Activated CD8-positive, alpha-beta memory T cell treated with anti-CD3 and anti-CD28 coated beads, Interleukin-2, amount 10 ng/mL, durations not matched to agents 7 days and 5 days (primary cell): ENCODE measurements at regions of chr6 and their contacts with region 1.

Region 1: GRCh38 chr6:168880271-168880670 is 373.4 kb downstream of the THBS2 start:
- DNase-seq: no peak
- ATAC-seq: no peak
- H3K4me3 Mint-ChIP-seq: no peak overlapping the region
- H3K27ac Mint-ChIP-seq: no peak overlapping the region
- H3K4me1 Mint-ChIP-seq: peaks cover 8% of the 10 kb centered on the region
- H3K27me3 Mint-ChIP-seq: no peaks in the 10 kb centered on the region

Region 2: GRCh38 chr6:168370310-168370991 is 509.8 kb before region 1 on chr6:
- CTCF ChIA-PET with region 1: interaction called, 11 read pairs
- DNase-seq: peak; percentile 54
- ATAC-seq: peak; percentile 73
- H3K4me3 Mint-ChIP-seq: no peak overlapping the region
- H3K27ac Mint-ChIP-seq: no peak overlapping the region
- H3K4me1 Mint-ChIP-seq: peaks cover 5% of the 10 kb centered on the region
- H3K27me3 Mint-ChIP-seq: peaks cover 8% of the 10 kb centered on the region

Region 3: GRCh38 chr6:168623736-168624135 is 256.5 kb before region 1 on chr6:
- CTCF ChIA-PET with region 1: no interaction called
- DNase-seq: no peak
- ATAC-seq: no peak
- H3K4me3 Mint-ChIP-seq: no peak overlapping the region
- H3K27ac Mint-ChIP-seq: no peak overlapping the region
- H3K4me1 Mint-ChIP-seq: peaks cover 11% of the 10 kb centered on the region
- H3K27me3 Mint-ChIP-seq: no peaks in the 10 kb centered on the region

Region 4: DNA sequence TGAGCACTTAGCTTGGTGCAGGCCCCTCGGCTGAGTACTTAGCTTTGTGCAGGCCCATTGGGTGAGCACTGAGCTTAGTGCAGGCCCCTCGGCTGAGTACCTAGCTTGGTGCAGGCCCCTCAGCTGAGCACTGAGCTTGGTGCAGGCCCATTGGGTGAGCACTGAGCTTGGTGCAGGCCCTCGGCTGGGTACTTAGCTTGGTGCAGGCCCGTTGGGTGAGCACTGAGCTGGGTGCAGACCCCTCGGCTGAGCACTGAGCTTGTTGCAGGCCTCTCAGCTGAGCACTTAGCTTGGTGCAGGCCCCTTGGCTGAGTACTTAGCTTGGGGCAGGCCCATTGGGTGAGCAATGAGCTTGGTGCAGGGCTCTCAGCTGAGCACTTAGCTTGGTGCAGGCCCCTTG is 13.7 kb before region 1 on chr6:
- CTCF ChIA-PET with region 1: no interaction called
- DNase-seq: no peak
- ATAC-seq: no peak
- H3K4me3 Mint-ChIP-seq: no peak overlapping the region
- H3K27ac Mint-ChIP-seq: no peak overlapping the region
- H3K4me1 Mint-ChIP-seq: no peaks in the 10 kb centered on the region
- H3K27me3 Mint-ChIP-seq: no peaks in the 10 kb centered on the region